Caco-2 (cell line): ENCODE measurements at regions of chr21 and their contacts with region 1.

Region 1: DNA sequence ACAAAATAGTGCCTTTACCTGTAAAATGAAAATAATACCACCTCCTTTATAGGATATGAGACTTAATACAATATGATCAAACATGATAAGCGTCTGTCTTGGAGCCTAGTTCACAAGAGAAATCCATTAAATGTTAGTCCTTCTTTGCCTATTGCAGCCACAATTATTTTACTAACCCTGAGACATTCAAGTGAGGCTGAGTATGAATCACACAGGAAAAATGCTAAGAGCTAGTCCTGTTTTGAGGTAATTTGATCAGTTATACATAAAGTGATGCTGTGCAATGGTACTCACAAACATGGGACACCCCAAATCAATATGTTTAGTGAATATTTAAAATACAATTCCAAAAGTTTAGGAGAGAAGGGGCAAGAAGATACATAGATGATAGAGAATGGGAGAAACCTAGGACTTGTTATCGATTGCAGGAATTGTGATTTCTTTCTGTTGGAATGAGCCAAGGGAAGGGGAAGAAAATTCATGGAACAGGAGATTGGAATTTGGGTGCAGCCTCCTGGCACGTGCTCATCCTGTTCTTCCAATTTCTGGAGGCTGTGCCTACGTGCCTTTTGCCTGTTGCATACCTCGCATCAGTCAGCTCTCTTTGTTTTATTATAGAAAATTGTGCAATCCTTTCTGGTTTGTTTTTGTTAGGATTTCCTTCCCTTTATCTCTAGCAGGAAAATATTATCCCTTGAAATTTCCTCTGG is 39.9 kb upstream of the BACH1 start:
- DNase-seq: peak; percentile 31 to 40
- H3K4me3 ChIP-seq: no peak overlapping the region
- H3K4me3 Mint-ChIP-seq: no peak overlapping the region
- H3K27ac Mint-ChIP-seq: no peak overlapping the region
- H3K4me1 ChIP-seq: peaks cover 14% of the 10 kb centered on the region
- H3K4me1 Mint-ChIP-seq: peaks cover 20% of the 10 kb centered on the region
- H3K27me3 ChIP-seq: no peaks in the 10 kb centered on the region
- H3K27me3 Mint-ChIP-seq: no peaks in the 10 kb centered on the region
- CTCF ChIP-seq: no peak

Region 2: GRCh38 chr21:29175408-29176134 is 83.2 kb before region 1 on chr21:
- CTCF ChIA-PET with region 1: no interaction called
- POLR2A ChIA-PET with region 1: no interaction called
- intact Hi-C with region 1: no loop called
- DNase-seq: no peak
- H3K4me3 ChIP-seq: no peak overlapping the region
- H3K4me3 Mint-ChIP-seq: no peak overlapping the region
- H3K27ac Mint-ChIP-seq: peak overlapping the region; percentile 79
- H3K4me1 ChIP-seq: peaks cover 34% of the 10 kb centered on the region
- H3K4me1 Mint-ChIP-seq: peaks cover 16% of the 10 kb centered on the region
- H3K27me3 ChIP-seq: no peaks in the 10 kb centered on the region
- H3K27me3 Mint-ChIP-seq: no peaks in the 10 kb centered on the region
- CTCF ChIP-seq: no peak

Region 3: GRCh38 chr21:29320031-29320430 is 61.2 kb after region 1 on chr21:
- CTCF ChIA-PET with region 1: no interaction called
- POLR2A ChIA-PET with region 1: no interaction called
- intact Hi-C with region 1: loop called (anchors 2 kb)
- DNase-seq: no peak
- H3K4me3 ChIP-seq: no peak overlapping the region
- H3K4me3 Mint-ChIP-seq: no peak overlapping the region
- H3K27ac Mint-ChIP-seq: no peak overlapping the region
- H3K4me1 ChIP-seq: no peaks in the 10 kb centered on the region
- H3K4me1 Mint-ChIP-seq: peaks cover 18% of the 10 kb centered on the region
- H3K27me3 ChIP-seq: no peaks in the 10 kb centered on the region
- H3K27me3 Mint-ChIP-seq: no peaks in the 10 kb centered on the region
- CTCF ChIP-seq: no peak